Dorsolateral prefrontal cortex (tissue), 120 donors: ENCODE measurements at regions of chr17 and their contacts with region 1.

Region 1: GRCh38 chr17:50478391-50479381 is at the start of gene RSAD1:
- DNase-seq: peak; percentile 68 to 86 (median 80)
- H3K4me3 ChIP-seq: peak within 1 kb of the TSS; percentile 59 to 95 (median 80)
- H3K27ac ChIP-seq: peak within 1 kb of the TSS in 57 of 59 donors; percentile 15 to 95 (median 80)
- H3K27me3 ChIP-seq: no peaks in the 10 kb centered on the region
- CTCF ChIP-seq: peak; percentile 72 to 98 (median 91)
- total RNA-seq, gene RSAD1: 32.2 to 82.5 (median 54.8) TPM

Region 2: GRCh38 chr17:50200457-50201275 is 278.0 kb before region 1 on chr17:
- intact Hi-C with region 1: loop called in 1 of 2 experiments (anchors 5 kb)
- DNase-seq: peak in 9 of 10 donors; percentile 63 to 82 (median 75)
- H3K4me3 ChIP-seq: peak overlapping the region; percentile 26 to 75 (median 56)
- H3K27ac ChIP-seq: peak overlapping the region in 27 of 59 donors; percentile 6 to 82 (median 62)
- H3K27me3 ChIP-seq: peaks cover 0 to 48% (median 26%) of the 10 kb centered on the region in 45 donors
- CTCF ChIP-seq: peak in 55 of 56 donors; percentile 97 to 100 (median 100)

Region 3: GRCh38 chr17:50397111-50397918 is 81.4 kb before region 1 on chr17 and contains the start of gene LRRC59:
- intact Hi-C with region 1: loop called in 1 of 2 experiments (anchors 2 kb)
- DNase-seq: peak; percentile 74 to 92 (median 84)
- H3K4me3 ChIP-seq: peak within 1 kb of the TSS; percentile 53 to 100 (median 93)
- H3K27ac ChIP-seq: peak within 1 kb of the TSS in 39 of 59 donors; percentile 7 to 88 (median 57)
- H3K27me3 ChIP-seq: no peaks in the 10 kb centered on the region
- CTCF ChIP-seq: peak; percentile 83 to 100 (median 99)
- total RNA-seq, gene LRRC59: 26.1 to 54.3 (median 38.0) TPM

Region 4: DNA sequence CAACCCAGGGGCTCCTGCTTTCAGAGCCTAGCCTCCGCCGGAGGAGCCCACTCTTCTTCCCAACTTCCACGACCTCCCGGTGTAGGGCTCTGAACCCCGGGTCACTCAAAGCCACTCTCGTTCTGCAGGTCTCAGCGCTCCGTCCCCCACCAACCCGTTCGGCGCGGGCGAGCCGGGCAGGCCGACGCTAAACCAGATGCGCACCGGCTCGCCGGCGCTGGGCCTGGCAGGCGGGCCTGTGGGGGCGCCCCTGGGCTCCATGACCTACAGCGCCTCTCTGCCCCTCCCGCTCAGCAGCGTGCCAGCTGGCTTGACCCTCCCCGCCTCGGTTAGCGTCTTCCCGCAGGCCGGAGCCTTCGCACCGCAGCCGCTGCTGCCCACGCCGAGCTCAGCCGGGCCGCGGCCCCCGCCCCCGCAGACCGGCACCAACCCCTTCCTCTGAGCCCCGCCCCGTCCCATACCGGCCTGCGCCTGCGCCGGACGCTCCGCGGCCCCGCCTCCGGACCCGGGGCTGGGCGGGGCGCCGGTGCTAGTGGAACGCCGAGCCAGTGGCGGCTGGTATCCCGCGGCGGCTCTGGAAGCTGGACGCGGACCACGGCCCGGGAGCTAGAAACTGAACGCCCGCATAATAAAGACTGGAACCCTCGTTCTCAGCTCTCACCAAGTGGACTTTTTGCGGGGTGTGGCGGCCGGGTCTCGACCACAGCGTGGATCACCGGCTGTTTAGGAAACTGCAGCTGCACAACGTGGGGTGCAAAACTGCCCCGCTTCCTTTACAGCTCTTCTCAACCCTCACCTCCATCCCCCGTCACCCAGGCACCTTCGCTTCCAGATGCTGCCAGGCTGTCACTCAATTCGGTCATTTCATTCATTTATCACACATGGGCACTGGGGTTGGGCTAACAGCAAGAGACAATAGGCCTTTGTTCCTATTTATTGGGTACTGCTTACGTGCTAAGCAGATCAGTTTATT is 63.3 kb after region 1 on chr17:
- intact Hi-C with region 1: loop called in 1 of 2 experiments (anchors 2 kb)
- DNase-seq: peak; percentile 70 to 93 (median 80)
- H3K4me3 ChIP-seq: peak overlapping the region; percentile 46 to 86 (median 75)
- H3K27ac ChIP-seq: peak overlapping the region in 56 of 59 donors; percentile 26 to 89 (median 79)
- H3K27me3 ChIP-seq: no peaks in the 10 kb centered on the region
- CTCF ChIP-seq: peak in 50 of 56 donors; percentile 9 to 65 (median 36)

Region 5: GRCh38 chr17:50689251-50689650 is 210.6 kb after region 1 on chr17:
- intact Hi-C with region 1: loop called (anchors 5 to 10 kb)
- DNase-seq: no peak
- H3K4me3 ChIP-seq: no peak overlapping the region
- H3K27ac ChIP-seq: no peak overlapping the region
- H3K27me3 ChIP-seq: no peaks in the 10 kb centered on the region
- CTCF ChIP-seq: no peak